Cardiac septum (tissue), 1 donor: ENCODE measurements at regions of chr1 and their contacts with region 1.

Region 1: DNA sequence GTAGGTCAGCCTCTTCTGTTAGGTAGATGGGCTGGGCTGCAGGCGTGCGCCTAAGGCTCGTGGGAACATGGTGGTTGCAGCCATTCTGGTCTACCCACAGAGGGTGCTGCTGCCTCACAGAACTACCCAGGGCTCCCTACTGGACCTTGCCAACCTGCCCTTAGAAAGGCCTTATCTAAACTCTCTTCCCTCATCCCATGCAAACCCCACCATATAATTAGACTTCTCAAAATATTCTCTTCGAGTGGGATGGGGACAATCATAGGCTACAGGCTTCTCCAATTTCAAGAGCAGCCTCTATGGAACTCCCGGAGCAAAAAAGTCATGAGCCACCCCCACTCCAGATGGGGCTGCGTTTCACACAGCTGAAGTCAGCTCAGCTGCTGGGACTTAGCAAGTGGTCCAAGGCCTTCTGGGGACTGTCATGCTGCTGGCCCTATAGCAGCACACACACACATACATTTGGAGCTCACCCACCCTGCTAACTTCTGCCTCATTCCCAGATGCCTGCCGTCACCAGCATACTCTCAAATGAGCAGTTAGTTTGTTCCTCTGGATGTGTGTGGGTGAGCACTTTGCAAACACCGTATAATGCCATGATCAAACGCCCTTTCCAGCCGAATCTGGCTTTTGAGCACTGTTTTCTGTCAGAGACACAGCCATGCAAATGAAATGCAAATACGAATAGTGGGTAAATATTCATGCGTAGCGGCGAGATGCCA is 6.1 kb upstream of the SDHB start:
- DNase-seq: peak; percentile 89

Region 2: GRCh38 chr1:17119773-17120480 is 60.0 kb after region 1 on chr1:
- intact Hi-C with region 1: loop called (anchors 5 kb)
- DNase-seq: peak; percentile 82

Region 3: GRCh38 chr1:17236779-17237560 is 177.1 kb after region 1 on chr1:
- intact Hi-C with region 1: loop called (anchors 2 kb)
- DNase-seq: peak; percentile 91

Region 4: DNA sequence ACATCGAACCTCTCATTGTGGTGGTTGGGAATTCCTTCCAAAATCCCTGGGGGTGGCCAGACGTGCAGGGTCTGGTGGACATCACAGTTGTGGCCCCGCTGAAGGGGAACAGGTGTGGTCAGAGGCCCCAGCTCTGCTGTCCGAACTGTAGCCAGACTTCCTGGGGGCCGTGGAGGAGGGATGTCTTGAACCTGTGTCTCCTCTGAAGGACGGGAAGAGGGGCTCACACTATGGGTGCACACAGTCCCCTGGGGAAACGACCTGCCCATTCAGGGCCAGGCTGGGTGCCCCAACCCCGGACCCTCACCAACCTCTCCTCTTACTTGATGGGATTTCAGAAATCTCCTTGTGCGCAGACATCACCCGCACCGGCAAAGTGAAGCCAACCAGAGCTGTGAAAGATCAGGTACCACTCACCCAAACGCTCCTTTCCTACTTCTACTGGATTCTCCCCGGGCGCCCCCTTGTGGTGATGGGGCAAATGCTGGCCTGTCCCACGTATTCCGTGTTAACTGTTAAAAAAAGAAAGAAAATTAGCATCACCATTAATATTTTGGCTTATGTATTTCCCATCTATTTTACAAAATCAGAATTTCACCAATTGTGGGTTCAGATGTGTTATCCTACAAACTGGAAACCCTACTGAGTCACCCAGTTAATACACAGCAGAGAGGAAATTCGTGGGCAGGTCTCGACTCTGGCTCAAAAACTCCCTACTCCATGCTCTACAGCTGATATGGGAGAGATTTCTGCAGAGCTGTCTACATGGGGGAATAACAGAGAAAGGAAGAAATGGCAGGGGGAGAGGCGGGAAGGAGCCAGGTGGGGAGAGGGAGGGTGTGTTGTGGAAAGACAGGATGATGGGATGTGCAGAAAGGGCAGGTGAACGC is 276.2 kb after region 1 on chr1:
- intact Hi-C with region 1: loop called (anchors 5 kb)
- DNase-seq: no peak